ENCODE measurements at regions of chr2 and their contacts with region 1.

Region 1: DNA sequence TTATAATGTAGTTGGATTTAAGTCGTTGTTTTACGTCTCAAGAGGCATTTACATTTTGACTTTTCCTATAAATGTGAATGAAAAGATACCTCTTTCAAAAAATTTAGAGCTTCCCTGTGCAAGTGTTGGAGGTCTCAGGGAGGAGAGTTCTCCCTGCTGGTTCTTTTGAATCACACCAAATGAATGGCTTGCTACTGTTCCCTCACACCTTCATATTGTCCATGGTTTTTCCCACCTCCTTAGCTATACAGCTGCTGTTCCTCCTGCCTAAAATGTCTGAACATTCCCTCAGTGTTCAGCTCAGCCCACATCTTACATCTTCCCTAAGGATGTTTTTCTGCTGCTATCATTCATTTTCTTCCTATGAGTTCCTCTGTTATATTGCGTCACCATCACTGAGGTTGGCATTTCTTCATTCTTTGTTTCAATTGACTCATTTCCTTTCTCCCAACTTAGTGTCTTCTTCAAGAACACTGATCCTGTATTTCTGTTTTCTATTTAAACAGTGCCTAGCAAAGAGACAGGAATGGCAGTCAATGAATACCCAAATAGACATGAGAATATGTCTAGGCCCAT is 46.0 kb downstream of the COX7A2L start:
- DNase-seq: no peak
- ATAC-seq: no peak
- H3K4me3 Mint-ChIP-seq: no peak overlapping the region
- H3K27ac Mint-ChIP-seq: no peak overlapping the region
- H3K4me1 Mint-ChIP-seq: no peaks in the 10 kb centered on the region
- H3K27me3 Mint-ChIP-seq: no peaks in the 10 kb centered on the region
- CTCF ChIP-seq: no peak

Region 2: GRCh38 chr2:42281416-42282081 is 33.4 kb before region 1 on chr2:
- CTCF ChIA-PET with region 1: no interaction called
- POLR2A ChIA-PET with region 1: interaction called, 4 read pairs
- intact Hi-C with region 1: loop called (anchors 5 kb)
- DNase-seq: no peak
- ATAC-seq: no peak
- H3K4me3 Mint-ChIP-seq: no peak overlapping the region
- H3K27ac Mint-ChIP-seq: peak overlapping the region; percentile 15
- H3K4me1 Mint-ChIP-seq: no peaks in the 10 kb centered on the region
- H3K27me3 Mint-ChIP-seq: no peaks in the 10 kb centered on the region
- CTCF ChIP-seq: no peak

Region 3: GRCh38 chr2:42961385-42961811 is 646.4 kb after region 1 on chr2:
- CTCF ChIA-PET with region 1: no interaction called
- POLR2A ChIA-PET with region 1: no interaction called
- intact Hi-C with region 1: no loop called
- DNase-seq: no peak
- ATAC-seq: no peak
- H3K4me3 Mint-ChIP-seq: peak overlapping the region; percentile 50
- H3K27ac Mint-ChIP-seq: peak overlapping the region; percentile 13
- H3K4me1 Mint-ChIP-seq: peaks cover 32% of the 10 kb centered on the region
- H3K27me3 Mint-ChIP-seq: peaks cover 2% of the 10 kb centered on the region
- CTCF ChIP-seq: no peak